ENCODE measurements at regions of chr19 and their contacts with region 1.

Region 1: DNA sequence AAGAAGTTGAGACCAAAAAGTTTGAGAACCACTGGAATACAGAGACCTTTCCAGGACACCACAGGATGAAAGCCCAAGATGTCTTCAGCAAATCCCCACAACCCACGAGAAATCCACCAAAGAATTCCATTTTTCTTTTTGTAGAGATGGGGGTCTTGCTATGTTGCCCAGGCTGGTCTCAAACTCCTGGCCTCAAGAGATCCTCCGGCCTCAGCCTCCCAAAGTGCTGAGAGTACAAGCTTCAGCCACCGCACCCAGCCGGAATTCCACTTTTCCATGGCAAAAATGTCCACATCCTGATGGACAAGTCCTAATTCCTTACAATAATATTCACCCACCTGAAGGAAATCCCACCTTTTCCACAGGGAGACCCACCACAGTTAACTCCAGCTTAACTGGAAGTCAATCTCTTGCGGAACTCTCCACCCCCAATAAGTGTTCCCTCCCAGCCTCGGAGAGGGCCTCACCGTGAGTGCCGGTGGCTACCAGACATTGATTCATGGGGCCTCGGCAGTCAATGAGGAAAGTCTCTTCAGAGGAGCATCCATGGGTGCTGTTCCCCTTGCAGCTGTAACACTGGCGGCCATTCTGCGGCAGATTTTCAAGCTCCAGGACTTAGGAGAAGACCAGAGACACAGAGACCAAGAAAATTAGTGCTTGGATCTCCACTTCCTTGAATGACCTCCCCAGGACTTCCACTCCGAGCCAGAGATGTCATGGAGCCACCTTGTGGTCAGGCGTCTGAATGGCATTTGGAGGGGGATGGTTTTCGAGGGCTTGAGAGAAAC is 12.3 kb upstream of the CADM4 start:
- DNase-seq: no peak

Region 2: GRCh38 chr19:42501733-42502132 is 1150.2 kb before region 1 on chr19:
- intact Hi-C with region 1: loop called in 1 of 2 experiments (anchors 5 kb)
- DNase-seq: no peak

Region 3: DNA sequence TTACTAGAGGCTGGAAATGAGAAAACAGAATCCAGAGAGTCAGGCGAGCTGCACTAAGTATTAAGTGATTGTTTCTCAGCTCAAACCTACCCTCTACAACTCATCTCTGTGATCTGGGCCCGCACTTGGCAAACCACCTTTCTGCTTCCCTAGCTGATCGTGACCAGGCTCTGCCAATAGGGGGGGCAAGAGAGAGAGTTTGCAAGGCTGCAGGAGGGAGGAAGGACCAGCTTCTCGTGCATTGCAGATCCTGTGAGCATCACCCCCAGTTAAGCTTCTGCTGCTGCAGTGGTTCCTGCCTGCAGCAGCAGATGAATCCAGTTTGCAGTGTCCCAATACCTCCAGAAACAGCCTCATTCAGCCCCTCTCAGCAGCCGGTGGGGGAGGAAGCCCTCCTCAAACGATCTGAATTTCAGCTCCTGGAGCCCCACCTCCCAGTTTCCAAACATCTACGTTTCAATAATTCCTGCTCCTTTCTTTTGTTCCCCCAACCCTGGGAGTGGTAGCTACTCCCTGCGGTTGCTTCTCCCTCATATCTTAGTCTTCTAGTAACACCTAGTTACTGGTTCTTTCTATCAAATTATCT is 96.7 kb before region 1 on chr19:
- intact Hi-C with region 1: loop called in 1 of 2 experiments (anchors 10 kb)
- DNase-seq: no peak